OCI-LY7 (cell line): ENCODE measurements at regions of chr19 and their contacts with region 1.

Region 1: DNA sequence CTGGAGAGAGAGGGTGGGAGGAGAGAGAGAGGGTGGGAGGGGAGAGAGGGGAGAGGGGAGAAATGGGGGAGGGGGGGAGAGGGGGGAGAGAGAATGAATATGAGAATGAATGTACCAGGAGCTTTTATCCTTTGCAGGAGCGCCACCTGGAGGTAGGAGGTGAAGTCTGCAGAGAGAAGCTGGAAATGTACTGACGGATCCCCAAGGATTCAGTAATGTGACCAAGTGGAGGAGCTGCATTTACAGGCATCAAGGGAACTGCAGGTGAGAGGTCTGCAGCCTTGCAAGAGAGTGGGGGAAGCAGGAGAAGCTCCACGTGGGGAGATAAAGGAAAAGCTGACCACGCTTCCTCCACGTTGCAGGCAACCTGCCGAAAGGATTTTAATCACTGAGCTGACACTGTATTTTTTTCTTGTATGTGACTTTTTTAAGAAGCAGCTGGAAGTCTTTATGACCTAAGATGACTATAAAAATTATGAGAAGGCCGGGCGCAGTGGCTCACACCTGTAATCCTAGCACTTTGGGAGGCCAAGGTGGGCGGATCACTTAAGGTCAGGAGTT is 33.7 kb downstream of the VSTM1 start:
- DNase-seq: peak; percentile 59
- H3K4me3 ChIP-seq: no peak overlapping the region
- H3K27ac ChIP-seq: no peak overlapping the region
- H3K4me1 ChIP-seq: no peaks in the 10 kb centered on the region
- CTCF ChIP-seq: peak; percentile 76

Region 2: DNA sequence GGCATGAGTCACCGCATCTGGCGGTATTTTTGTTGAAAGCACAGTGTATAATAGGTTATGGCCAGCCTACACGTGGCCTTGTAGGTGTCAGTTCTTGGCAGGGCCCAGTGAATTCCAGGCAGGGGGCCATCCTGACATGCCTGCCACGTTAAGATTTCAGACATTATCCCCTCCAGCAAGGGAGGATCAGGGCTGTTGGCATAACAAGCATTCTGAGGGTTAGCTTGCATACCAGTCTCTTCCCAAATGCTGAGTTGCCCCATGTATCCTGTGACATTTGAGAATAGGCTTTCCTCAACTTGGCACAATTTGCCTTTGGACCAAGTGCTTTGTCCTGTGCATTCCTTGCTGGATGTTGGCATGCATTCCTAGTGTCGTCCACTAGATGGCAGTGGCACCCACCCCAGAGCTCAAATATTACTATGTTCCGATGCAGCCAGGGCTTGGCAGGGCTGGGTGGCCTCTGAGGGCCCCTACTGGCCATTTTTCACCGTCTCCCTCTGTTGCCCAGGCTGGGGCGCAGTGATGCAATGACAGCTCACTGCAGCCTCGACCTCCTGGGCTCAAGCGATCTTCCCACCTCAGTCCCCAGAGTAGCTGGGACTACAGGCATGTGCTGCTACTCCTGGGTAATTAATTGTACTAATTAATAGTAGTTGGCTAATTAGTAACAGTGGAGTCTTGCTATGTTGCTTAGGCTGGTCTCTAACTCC is 237.1 kb before region 1 on chr19:
- CTCF ChIA-PET with region 1: no interaction called
- POLR2A ChIA-PET with region 1: no interaction called
- intact Hi-C with region 1: loop called (anchors 2 kb)
- DNase-seq: peak; percentile 81
- H3K4me3 ChIP-seq: no peak overlapping the region
- H3K27ac ChIP-seq: no peak overlapping the region
- H3K4me1 ChIP-seq: no peaks in the 10 kb centered on the region
- CTCF ChIP-seq: peak; percentile 98